Right cardiac atrium (tissue), 5 donors: ENCODE measurements at regions of chr6 and their contacts with region 1.

Region 1: DNA sequence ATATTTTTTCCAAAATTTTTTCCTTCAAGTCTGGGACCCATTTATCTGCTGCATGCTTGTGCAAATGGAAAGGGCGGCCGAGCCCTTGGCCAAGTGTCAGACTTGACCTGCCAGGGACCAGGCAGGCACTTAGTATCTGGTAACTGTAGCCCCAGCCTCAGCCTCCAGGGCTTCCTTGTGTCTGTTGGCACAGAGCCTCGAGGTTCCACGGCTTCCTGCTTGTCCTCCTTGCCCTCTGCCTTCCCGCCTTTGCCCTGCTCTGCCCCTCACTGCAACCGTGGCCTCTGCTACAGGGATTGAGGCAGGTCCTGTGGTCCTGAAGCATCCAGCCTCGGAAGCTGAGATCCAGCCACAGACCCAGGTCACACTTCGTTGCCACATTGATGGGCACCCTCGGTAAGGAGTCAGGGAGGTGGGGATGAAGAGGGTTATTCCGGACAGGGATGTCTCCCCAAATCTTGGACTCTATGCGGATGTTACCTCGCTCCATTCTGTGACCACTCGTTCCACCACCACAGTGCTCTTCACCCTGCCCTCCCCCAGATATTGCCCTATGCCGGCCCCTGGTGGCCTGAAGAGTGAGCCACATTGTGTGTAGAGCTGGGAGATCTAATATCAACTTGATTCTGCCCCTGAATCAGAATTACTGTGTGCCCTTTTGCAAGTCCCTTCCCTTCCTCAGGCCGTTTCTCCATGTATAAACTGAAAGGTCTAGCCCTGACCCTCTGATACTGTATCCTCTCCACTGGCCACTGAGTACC is 41.5 kb upstream of the SRF start:
- DNase-seq: peak; percentile 41 to 78 (median 70)
- ATAC-seq: peak; percentile 72 to 85
- H3K4me3 ChIP-seq: no peak overlapping the region
- H3K27ac ChIP-seq: no peak overlapping the region
- H3K4me1 ChIP-seq: no peaks in the 10 kb centered on the region
- H3K27me3 ChIP-seq: no peaks in the 10 kb centered on the region

Region 2: GRCh38 chr6:42901536-42901957 is 228.1 kb before region 1 on chr6:
- intact Hi-C with region 1: loop called in 1 of 4 experiments (anchors 5 kb)
- DNase-seq: peak; percentile 83 to 89 (median 87)
- ATAC-seq: peak; percentile 96
- H3K4me3 ChIP-seq: no peak overlapping the region
- H3K27ac ChIP-seq: no peak overlapping the region
- H3K4me1 ChIP-seq: no peaks in the 10 kb centered on the region
- H3K27me3 ChIP-seq: no peaks in the 10 kb centered on the region

Region 3: GRCh38 chr6:43070028-43070632 is 59.5 kb before region 1 on chr6:
- intact Hi-C with region 1: loop called in 2 of 4 experiments (anchors 5 to 10 kb)
- DNase-seq: no peak
- ATAC-seq: no peak
- H3K4me3 ChIP-seq: no peak overlapping the region
- H3K27ac ChIP-seq: no peak overlapping the region
- H3K4me1 ChIP-seq: no peaks in the 10 kb centered on the region
- H3K27me3 ChIP-seq: no peaks in the 10 kb centered on the region

Region 4: DNA sequence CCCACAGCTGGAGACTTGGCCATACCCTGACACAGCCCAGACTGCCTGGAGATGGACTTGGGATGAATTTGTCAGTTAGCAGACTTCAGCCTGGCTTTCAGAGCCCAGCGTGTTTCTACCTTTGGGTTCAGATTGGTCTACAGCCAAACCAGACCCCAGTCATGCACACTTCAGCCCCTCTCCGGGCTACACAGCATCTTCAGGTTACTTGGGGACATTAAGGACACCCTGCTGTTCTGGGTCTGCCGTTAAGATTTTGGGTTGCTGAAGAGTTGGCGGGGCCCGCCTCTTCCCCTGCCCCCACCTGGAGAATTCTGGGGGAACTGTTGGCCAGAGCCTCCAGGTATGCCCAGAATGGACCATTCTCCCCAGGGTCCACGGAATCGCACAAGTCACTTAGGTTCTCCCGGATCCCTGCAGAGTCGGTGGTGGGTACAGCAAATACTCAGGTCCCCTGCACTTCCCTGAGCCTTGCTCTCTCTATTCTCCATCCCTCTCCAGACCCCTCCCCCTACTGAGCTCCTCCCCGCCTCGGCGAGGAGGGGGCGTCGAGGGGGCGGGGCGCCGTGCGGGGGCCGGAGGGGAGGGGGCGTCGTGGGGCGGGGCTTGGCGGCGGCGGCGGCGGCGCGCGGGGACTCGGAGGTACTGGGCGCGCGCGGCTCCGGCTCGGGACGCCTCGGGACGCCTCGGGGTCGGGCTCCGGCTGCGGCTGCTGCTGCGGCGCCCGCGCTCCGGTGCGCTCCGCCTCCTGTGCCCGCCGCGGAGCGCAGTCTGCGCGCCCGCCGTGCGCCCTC is 53.7 kb before region 1 on chr6 and contains the start of gene PTK7:
- intact Hi-C with region 1: loop called in 2 of 4 experiments (anchors 5 to 10 kb)
- DNase-seq: peak; percentile 47 to 84 (median 79)
- ATAC-seq: peak; percentile 46 to 64
- H3K4me3 ChIP-seq: peak within 1 kb of the TSS; percentile 90
- H3K27ac ChIP-seq: no peak within 1 kb of the TSS
- H3K4me1 ChIP-seq: peaks cover 2% of the 10 kb centered on the region
- H3K27me3 ChIP-seq: no peaks in the 10 kb centered on the region
- total RNA-seq, gene PTK7: 5.8 to 9.4 (median 8.2) TPM

Region 5: DNA sequence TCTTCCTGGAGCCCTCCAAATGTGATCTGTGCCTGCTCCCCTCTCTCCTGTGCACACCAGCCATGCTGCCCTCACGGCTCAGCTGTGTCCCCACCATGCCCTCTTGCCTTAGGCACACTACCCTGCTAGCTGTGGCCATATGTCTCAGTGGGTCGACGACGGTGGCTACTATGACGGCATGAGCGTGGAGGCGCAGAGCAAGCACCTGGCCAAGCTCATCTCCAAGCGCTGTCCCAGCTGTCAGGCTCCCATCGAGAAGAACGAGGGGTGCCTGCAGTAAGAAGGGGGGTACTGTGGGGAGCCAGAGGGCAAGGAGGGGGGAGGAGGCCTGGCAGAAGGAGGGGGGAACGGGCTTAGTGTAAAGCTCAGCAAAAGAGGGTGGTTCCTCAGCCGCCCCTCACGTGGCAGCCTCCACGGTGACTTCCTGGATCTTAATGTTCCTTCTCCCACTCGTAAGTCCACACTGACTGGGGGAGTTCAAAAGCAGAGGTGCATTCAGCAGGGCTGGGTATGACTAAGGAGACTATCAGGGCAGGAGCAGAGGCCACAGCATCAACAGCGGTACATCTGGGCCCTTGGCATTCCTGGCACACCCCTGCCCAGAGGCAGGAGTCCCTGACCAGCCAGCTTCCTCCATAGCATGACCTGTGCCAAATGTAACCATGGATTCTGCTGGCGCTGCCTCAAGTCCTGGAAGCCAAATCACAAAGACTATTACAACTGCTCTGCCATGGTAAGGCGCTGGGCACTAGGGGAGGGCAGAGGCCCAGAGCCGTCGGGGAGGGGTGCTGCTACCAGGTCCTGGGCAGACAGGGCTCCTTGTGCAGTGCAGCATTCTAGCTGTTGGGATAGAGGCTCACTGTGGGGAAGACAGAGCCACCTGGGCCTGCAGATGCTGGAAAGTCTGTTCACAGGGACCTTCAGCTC is 91.7 kb after region 1 on chr6:
- intact Hi-C with region 1: no loop called
- DNase-seq: no peak
- ATAC-seq: no peak
- H3K4me3 ChIP-seq: no peak overlapping the region
- H3K27ac ChIP-seq: no peak overlapping the region
- H3K4me1 ChIP-seq: no peaks in the 10 kb centered on the region
- H3K27me3 ChIP-seq: no peaks in the 10 kb centered on the region